ENCODE measurements at regions of chr7 and their contacts with region 1.

Region 1: GRCh38 chr7:4830176-4830575 is 31.7 kb downstream of the PAPOLB start:
- DNase-seq: no peak
- H3K4me3 ChIP-seq: no peak overlapping the region
- H3K27ac ChIP-seq: no peak overlapping the region
- H3K4me1 ChIP-seq: no peaks in the 10 kb centered on the region
- H3K27me3 ChIP-seq: no peaks in the 10 kb centered on the region
- CTCF ChIP-seq: peak in 3 of 4 experiments; percentile 31 to 67 (median 54)
- POLR2A ChIP-seq: no peak

Region 2: DNA sequence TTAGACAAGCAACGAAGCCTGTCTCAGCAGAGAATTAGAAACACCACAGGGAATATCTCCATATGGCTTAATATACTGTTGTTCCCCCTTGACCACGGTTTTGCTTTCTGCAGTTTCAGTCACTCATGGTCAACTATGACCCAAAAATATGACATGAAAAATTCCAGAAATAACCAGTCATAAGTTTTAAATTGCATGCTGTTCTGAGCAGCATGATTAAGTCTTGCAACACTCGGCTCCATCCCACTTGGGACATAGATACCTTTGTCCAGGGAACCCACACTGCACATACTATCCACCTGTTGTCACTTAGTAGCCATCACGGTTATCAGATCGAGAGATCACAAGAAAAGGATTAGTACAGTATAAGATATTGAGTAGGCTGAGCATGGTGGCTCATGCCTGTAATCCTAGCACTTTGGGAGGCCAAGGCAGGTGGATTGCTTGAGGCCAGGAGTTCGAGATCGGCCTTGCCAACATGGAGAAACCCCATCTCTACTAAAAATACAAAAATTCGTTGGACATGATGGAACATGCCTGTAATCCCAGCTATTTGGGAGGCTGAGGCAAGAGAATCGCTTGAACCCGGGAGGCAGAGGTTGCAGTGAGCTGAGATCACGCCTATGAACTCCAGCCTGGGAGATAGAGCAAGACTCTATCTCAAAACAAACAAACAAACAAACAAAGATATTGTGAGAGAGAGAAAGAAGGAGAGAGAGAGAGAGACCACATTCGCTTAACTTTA is 208.6 kb before region 1 on chr7:
- intact Hi-C with region 1: no loop called
- DNase-seq: no peak
- H3K4me3 ChIP-seq: no peak overlapping the region
- H3K27ac ChIP-seq: no peak overlapping the region
- H3K4me1 ChIP-seq: no peaks in the 10 kb centered on the region
- H3K27me3 ChIP-seq: no peaks in the 10 kb centered on the region
- CTCF ChIP-seq: no peak
- POLR2A ChIP-seq: no peak

Region 3: GRCh38 chr7:4753711-4754432 is 76.3 kb before region 1 on chr7:
- intact Hi-C with region 1: no loop called
- DNase-seq: peak; percentile 77
- H3K4me3 ChIP-seq: no peak overlapping the region
- H3K27ac ChIP-seq: no peak overlapping the region
- H3K4me1 ChIP-seq: no peaks in the 10 kb centered on the region
- H3K27me3 ChIP-seq: no peaks in the 10 kb centered on the region
- CTCF ChIP-seq: peak; percentile 91 to 96 (median 94)
- POLR2A ChIP-seq: no peak

Region 4: DNA sequence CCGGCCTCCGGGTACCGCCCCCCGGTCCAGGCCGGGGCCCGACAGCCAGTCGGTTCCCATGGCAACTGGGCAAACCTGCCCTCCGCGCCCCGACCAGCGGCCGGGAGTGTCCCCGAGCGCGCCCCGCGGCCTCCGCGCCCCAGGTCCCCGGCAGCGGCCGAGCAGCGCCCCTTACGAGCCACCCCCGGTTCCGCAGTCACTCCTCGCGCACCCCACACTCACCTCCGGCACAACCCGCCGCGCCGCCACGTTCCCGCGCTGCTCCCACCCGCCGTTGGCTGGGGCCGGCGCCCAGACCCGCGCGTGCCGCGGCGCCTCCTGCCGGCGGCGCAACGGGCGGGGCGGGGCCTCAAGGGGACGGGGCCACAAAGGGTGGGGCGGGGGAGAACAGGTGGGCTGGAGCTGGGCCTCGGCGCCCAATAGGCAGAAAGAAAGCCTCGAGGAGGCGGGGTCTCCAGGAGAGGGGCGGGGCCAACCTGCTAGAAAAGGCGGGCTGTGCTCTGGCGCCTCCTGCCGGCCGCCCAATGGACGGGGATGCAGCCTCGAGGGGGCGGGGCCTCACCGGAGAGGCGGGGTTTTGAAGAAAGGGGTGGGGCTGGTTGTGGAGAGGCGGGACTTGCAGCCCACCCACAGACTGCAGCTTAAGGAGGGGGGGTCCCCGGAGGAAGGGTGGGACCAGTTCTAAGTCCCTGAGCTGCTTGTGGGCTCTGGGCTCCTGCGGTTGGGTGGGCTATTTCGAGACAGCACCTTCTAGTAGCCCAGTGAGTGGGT is 53.4 kb after region 1 on chr7 and contains the start of gene RADIL:
- intact Hi-C with region 1: loop called (anchors 10 kb)
- DNase-seq: peak; percentile 79
- H3K4me3 ChIP-seq: peak within 1 kb of the TSS; percentile 39 to 50
- H3K27ac ChIP-seq: peak within 1 kb of the TSS; percentile 57 to 59
- H3K4me1 ChIP-seq: no peaks in the 10 kb centered on the region
- H3K27me3 ChIP-seq: no peaks in the 10 kb centered on the region
- CTCF ChIP-seq: peak; percentile 44 to 79 (median 65)
- POLR2A ChIP-seq: no peak
- total RNA-seq, gene RADIL: 1.8 to 12.0 TPM

Region 5: DNA sequence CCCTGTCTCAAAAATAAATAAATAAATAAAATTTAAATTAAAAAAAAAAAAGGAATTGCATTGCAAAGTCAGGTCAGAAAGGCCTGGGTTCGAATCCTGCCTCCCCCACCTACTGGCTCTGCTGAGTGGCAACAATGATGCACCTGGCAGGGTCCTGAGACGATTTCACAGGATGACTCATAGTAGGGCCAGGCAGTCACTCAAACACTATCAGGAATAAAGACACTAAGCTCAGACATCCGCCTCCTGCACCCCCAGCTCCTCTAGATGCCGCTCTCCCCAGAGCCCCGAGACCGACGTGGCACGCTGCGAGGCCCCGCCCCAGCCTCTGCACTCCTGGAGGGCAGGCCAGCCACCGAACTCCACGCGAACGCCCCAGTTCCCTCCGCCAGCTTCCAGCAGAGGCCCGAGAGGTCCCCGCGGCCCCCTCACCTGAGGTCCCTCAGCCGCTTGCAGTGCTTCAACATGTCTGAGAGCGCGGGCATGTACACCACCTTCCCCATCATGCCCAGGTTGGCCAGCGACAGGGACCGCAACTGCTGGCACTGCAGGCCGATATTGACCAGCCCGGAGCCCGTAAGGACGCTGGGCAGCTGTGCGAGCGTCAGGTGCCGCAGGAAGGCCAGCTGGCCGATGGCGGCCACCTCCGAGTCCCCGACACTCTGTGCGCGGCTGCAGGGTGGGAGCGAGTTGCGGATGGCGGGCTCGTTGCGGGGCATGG is 670.0 kb after region 1 on chr7:
- intact Hi-C with region 1: no loop called
- DNase-seq: no peak
- H3K4me3 ChIP-seq: no peak overlapping the region
- H3K27ac ChIP-seq: no peak overlapping the region
- H3K4me1 ChIP-seq: peaks cover 6% of the 10 kb centered on the region
- H3K27me3 ChIP-seq: no peaks in the 10 kb centered on the region
- CTCF ChIP-seq: no peak
- POLR2A ChIP-seq: no peak